HAP-1 (cell line): ENCODE measurements at regions of chr13 and their contacts with region 1.

Region 1: DNA sequence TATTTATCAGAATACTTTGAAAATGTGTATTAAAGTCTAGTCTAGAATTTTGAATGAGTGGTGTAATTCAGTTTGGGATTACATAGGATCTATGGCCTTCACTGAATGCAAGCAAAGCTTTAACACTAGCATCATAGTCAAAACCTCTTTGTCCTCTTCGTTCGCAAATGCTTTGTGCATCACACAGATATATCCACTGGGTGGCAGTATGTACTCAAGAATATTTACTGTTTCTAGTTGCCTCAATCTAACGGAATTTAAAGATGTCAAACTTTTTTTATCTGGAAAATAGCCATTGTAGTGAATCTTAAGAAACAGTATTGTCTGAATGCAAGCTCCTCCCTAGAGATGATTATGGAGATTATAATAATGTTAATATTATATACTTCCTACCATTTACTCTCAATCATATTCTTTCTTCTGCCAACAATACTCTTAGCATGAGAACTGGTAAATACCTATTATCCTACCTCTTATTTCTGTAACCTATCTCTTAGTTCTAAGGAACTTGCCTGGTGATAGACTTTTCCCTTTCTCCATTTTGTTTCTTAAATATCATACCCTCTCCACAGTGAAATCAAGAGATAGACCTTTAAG is 25.8 kb downstream of the LACC1 start:
- DNase-seq: peak; percentile 56 to 79
- H3K4me3 ChIP-seq: no peak overlapping the region
- H3K4me1 ChIP-seq: no peaks in the 10 kb centered on the region
- H3K27me3 ChIP-seq: peaks cover 5% of the 10 kb centered on the region

Region 2: DNA sequence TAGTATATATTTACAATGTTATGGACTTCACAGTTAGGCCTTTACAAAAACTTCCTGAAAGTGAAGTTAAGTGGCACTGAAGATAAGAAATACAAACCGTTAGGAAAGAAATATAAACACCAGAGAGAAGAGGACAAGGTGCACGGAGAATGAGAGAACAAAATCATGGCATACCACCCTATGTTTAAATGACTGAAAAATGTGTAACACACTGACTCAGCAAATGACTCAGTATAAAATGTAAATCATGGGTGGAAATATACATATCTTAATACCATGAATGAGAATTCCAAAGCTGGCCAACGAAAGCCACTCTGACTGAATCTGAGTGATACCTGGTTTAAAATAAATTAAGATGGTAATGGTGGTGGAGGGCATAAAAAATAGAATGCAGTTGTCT is 621.4 kb before region 1 on chr13:
- in situ Hi-C with region 1: no loop called
- DNase-seq: no peak
- H3K4me3 ChIP-seq: no peak overlapping the region
- H3K4me1 ChIP-seq: no peaks in the 10 kb centered on the region; the same call in none of the 2 replicates
- H3K27me3 ChIP-seq: no peaks in the 10 kb centered on the region

Region 3: GRCh38 chr13:43374621-43375020 is 530.9 kb before region 1 on chr13:
- in situ Hi-C with region 1: no loop called
- DNase-seq: no peak
- H3K4me3 ChIP-seq: no peak overlapping the region
- H3K4me1 ChIP-seq: no peaks in the 10 kb centered on the region; the same call in 1 of the 2 replicates
- H3K27me3 ChIP-seq: no peaks in the 10 kb centered on the region

Region 4: GRCh38 chr13:44231786-44232516 is 326.4 kb after region 1 on chr13:
- in situ Hi-C with region 1: no loop called
- DNase-seq: no peak
- H3K4me3 ChIP-seq: no peak overlapping the region
- H3K4me1 ChIP-seq: no peaks in the 10 kb centered on the region
- H3K27me3 ChIP-seq: peaks cover 60% of the 10 kb centered on the region

Region 5: DNA sequence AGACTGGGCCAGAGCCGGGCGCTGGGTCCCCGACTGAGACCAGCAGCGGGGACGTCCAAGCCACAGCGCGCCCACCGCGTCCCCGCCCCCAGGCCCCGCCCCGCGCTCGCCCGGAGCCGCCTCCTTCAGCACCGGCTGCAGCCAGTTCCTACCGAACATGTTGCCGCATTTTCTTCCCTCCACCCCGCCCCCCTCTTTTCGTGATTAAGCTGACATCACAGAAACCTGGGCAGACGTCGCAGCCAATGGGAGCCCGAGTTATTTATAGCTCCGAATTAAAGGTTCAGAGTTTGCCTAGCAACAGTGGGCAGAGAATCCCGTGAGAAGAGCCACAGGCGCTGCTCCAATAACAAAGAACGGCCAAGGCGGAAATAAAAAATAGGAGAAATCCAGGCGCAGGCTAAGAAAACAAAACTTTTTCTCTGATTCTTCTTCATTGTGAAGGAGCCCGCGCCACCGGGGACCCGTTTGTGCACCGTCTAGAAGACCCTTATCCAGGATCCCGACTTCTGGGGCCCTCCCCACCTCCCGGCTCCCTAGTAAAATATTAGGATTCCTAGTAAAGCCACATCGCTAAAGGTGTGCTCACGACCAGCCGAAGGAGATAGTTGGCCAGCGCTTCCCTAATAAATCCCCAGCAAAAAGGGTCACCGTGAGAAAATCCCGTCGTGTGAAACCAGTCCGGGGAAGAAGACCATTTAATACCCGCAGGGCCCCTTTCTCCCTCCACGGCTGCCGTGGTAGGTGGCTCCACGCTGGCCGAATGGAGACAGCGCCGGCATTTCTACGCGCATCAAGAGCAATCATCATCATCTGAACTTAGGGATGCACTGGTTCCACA is 529.8 kb after region 1 on chr13:
- in situ Hi-C with region 1: loop called (anchors 10 kb)
- DNase-seq: peak; percentile 96 to 99
- H3K4me3 ChIP-seq: peak overlapping the region; percentile 55
- H3K4me1 ChIP-seq: peaks cover 12% of the 10 kb centered on the region
- H3K27me3 ChIP-seq: no peaks in the 10 kb centered on the region

Region 6: DNA sequence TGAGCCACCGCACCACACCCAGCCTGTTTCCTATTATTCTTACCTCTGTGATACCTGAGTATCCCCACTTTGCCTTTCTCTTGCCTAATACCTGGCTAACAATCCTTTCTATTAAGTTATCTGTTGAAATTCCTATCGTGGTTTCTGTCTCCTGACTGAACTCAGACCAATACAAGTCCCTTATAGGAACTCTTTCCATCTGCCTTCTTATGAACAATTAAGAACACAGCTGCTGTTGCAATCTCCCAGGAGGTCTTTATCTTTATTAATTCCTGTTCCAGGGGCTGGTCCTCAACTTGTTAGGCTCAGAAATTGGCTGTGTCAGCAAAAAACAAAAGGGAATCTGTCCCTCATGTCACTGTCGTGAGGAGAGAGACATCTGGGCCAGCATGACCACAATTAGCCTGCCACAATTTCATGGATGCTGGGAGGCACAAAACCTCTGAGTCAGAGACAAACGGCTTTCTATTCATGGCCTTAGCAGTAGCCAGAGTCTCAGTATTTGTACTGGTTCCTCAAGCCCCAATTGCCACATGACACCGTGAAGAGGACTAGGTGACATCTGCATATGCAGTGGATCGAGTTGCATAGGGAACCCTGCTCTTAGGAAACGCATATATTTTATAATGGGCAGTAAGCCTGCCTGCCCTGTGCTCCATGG is 1025.6 kb after region 1 on chr13:
- in situ Hi-C with region 1: loop called (anchors 25 kb)
- DNase-seq: no peak
- H3K4me3 ChIP-seq: no peak overlapping the region
- H3K4me1 ChIP-seq: no peaks in the 10 kb centered on the region
- H3K27me3 ChIP-seq: no peaks in the 10 kb centered on the region